PC-3 (cell line): ENCODE measurements at regions of chr10 and their contacts with region 1.

Region 1: GRCh38 chr10:12466704-12467305 is 117.5 kb downstream of the CAMK1D start:
- DNase-seq: no peak
- ATAC-seq: no peak
- H3K4me3 ChIP-seq: no peak overlapping the region
- H3K27ac ChIP-seq: no peak overlapping the region
- H3K4me1 ChIP-seq: peaks cover 6% of the 10 kb centered on the region; the same call in 1 of the 2 replicates
- H3K27me3 ChIP-seq: no peaks in the 10 kb centered on the region
- CTCF ChIP-seq: no peak

Region 2: DNA sequence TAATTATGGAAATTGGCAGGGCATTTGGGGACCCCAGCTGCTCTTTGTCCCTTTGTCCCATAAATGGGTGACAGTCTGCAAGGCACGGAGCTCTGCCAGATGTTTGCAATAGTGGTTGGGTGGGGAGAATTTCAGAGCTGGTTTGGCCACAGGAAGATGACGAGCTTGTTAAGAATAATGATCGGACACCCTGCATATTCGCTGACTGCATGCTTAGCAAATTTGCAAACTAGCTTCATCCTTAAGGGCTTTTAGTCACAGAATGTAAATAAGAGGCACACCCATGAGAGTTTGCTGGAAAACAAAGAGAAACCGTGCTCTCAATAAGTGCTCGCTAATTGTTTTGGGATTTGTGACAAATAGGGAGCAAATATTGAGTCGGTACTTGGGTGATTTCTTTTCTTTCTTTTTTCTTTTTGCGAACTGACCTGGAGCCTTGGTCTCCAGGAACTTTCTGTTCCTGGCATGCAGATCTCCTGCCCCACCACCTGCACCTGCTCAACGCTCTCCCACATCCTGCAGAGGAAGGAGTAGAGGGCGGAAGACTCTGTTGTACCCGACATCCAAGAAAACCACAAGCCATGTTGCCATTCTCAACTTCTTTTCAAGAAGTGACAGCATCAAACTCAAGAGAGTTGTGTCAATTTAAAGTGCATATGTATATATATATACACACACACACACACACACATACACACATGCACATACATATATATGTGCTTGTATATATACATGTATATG is 121.5 kb after region 1 on chr10:
- CTCF ChIA-PET with region 1: no interaction called
- POLR2A ChIA-PET with region 1: no interaction called
- intact Hi-C with region 1: loop called (anchors 5 kb)
- DNase-seq: peak; percentile 63
- ATAC-seq: peak; percentile 86
- H3K4me3 ChIP-seq: peak overlapping the region; percentile 61
- H3K27ac ChIP-seq: peak overlapping the region; percentile 67
- H3K4me1 ChIP-seq: peaks cover 5% of the 10 kb centered on the region; the same call in 1 of the 2 replicates
- H3K27me3 ChIP-seq: no peaks in the 10 kb centered on the region
- CTCF ChIP-seq: no peak